ENCODE measurements at regions of chr15 and their contacts with region 1.

Region 1: DNA sequence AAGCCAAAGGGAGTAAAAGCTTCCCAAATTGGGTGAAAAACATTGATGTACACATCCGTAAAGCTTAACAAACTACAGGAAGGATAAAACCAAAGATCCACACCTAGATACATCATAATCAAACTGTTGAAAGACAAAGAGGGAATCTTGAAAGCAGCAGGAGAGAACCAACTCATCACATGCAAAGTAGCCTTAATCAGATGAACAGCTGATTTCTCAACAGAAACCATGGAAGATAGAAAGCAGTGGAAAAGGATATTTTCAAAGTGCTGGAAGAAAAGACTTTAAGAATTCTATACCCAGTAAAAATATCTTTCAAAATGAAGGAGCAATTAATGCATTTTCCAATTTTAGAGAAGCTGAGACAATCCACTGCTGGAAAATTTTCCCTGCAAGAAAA is 36.8 kb downstream of the CHRNA7 start:
- DNase-seq: no peak
- ATAC-seq: no peak
- H3K4me3 ChIP-seq: no peak overlapping the region
- H3K27ac ChIP-seq: no peak overlapping the region
- H3K4me1 ChIP-seq: no peaks in the 10 kb centered on the region
- H3K27me3 ChIP-seq: no peaks in the 10 kb centered on the region
- CTCF ChIP-seq: no peak
- POLR2A ChIP-seq: no peak

Region 2: DNA sequence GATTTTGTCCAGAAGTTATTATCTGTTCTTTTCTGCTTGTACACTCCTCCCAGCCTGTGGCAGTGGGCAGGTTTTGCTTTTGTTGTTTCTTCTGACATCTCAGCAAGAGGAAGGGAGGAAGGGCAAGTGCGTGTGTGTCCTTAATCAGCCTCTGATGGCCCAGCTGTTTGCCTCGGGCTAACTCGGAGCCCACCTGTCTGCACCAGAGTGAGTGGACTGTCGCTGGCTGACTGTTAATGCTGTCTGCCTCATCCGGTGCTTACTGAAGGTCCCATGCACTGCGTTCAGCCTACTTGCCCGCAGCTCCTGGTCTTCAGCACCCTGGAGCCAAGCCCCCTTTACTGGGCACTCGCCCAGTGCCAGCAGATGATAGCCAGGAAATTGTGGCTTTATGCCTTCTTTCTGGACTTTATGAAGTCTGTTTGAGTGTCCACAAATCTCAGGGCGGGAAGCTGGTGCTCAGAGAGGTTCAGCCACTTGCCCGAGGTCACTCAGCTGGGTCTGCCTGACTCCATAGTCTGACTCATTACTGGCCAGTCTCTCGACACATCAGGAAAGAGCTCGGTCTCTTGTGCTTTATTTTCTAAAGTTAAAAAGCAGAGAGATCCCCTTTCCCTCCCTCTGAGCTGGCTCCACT is 52.7 kb after region 1 on chr15:
- intact Hi-C with region 1: loop called in 1 of 10 experiments (anchors 5 kb)
- DNase-seq: no peak
- ATAC-seq: no peak
- H3K4me3 ChIP-seq: no peak overlapping the region
- H3K27ac ChIP-seq: no peak overlapping the region
- H3K4me1 ChIP-seq: no peaks in the 10 kb centered on the region
- H3K27me3 ChIP-seq: peaks cover 0 to 14% (median 0%) of the 10 kb centered on the region in 9 donors
- CTCF ChIP-seq: no peak
- POLR2A ChIP-seq: no peak